Dorsolateral prefrontal cortex (tissue), 120 donors: ENCODE measurements at regions of chr21 and their contacts with region 1.

Region 1: GRCh38 chr21:32978341-32979270 is 47.1 kb upstream of the OLIG2 start:
- DNase-seq: peak; percentile 16 to 90 (median 80)
- H3K4me3 ChIP-seq: peak overlapping the region in 18 of 59 donors; percentile 2 to 52 (median 18)
- H3K27ac ChIP-seq: peak overlapping the region; percentile 85 to 100 (median 98)
- H3K27me3 ChIP-seq: peaks cover 0 to 12% (median 0%) of the 10 kb centered on the region in 45 donors
- CTCF ChIP-seq: peak in 14 of 56 donors; percentile 4 to 39 (median 14)

Region 2: DNA sequence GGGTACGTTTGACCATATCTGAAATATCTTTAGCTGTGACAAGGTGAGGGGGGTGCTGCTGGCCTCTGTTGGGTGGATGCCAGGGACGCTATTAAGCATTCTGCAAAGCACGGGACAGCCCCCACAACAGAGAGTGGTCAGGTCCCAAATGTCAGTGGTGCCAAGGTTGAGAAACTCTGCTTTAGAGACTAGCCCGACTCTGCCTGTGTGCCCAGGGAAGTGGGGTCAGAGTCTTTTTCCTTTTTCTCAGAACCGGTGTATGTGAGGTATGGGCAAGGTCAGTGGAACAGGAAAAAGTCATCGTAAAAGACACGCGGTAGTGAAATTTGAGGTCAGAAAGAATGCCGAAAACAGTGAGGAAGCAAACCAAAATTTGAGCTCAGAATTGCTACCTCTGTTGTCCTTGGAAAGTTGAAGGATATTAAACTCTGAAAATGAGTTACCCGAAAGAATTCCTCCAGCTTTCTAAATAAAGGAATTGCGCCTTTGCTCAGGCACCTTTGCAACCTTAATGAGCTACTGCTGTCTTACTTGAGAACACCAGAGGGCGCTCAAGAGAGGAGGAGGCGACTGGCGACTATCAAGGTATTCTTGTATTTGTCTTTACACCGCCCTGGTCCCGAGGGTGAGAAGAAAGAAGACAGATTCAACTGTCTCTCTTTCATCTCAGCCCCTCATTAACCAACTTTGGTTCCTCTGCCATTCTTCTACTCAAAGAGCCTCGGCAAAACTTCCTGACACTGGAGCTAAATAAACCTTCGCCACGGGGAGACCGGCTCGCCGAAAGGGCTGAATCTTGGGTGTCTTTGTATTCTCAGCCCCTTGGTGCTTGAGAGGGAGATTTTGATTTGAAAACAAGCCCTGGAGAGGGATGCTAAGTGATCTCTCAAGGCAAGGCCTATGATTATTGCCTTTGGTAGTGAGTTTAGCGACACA is 38.3 kb before region 1 on chr21:
- intact Hi-C with region 1: loop called in 1 of 2 experiments (anchors 5 kb)
- DNase-seq: peak in 4 of 10 donors; percentile 19 to 59 (median 34)
- H3K4me3 ChIP-seq: peak overlapping the region in 14 of 59 donors; percentile 3 to 45 (median 29)
- H3K27ac ChIP-seq: peak overlapping the region in 11 of 59 donors; percentile 8 to 64 (median 45)
- H3K27me3 ChIP-seq: peaks cover 0 to 13% (median 0%) of the 10 kb centered on the region in 45 donors
- CTCF ChIP-seq: peak; percentile 48 to 95 (median 82)

Region 3: GRCh38 chr21:32955311-32956060 is 23.1 kb before region 1 on chr21:
- intact Hi-C with region 1: loop called in 1 of 2 experiments (anchors 2 kb)
- DNase-seq: peak in 4 of 10 donors; percentile 21 to 59 (median 40)
- H3K4me3 ChIP-seq: peak overlapping the region in 47 of 59 donors; percentile 2 to 56 (median 32)
- H3K27ac ChIP-seq: peak overlapping the region in 56 of 59 donors; percentile 1 to 91 (median 72)
- H3K27me3 ChIP-seq: peaks cover 0 to 57% (median 2%) of the 10 kb centered on the region in 45 donors
- CTCF ChIP-seq: peak in 5 of 56 donors; percentile 6 to 20 (median 11)

Region 4: DNA sequence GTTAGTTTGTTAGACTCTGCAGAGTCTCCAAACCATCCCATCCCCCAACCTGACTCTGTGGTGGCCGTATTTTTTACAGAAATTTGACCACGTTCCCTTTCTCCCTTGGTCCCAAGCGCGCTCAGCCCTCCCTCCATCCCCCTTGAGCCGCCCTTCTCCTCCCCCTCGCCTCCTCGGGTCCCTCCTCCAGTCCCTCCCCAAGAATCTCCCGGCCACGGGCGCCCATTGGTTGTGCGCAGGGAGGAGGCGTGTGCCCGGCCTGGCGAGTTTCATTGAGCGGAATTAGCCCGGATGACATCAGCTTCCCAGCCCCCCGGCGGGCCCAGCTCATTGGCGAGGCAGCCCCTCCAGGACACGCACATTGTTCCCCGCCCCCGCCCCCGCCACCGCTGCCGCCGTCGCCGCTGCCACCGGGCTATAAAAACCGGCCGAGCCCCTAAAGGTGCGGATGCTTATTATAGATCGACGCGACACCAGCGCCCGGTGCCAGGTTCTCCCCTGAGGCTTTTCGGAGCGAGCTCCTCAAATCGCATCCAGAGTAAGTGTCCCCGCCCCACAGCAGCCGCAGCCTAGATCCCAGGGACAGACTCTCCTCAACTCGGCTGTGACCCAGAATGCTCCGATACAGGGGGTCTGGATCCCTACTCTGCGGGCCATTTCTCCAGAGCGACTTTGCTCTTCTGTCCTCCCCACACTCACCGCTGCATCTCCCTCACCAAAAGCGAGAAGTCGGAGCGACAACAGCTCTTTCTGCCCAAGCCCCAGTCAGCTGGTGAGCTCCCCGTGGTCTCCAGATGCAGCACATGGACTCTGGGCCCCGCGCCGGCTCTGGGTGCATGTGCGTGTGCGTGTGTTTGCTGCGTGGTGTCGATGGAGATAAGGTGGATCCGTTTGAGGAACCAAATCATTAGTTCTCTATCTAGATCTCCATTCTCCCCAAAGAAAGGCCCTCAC is 47.2 kb after region 1 on chr21 and contains the start of gene OLIG2:
- intact Hi-C with region 1: loop called (anchors 2 to 5 kb)
- DNase-seq: peak; percentile 46 to 96 (median 95)
- H3K4me3 ChIP-seq: peak within 1 kb of the TSS; percentile 35 to 82 (median 61)
- H3K27ac ChIP-seq: peak within 1 kb of the TSS; percentile 40 to 93 (median 86)
- H3K27me3 ChIP-seq: peaks cover 0 to 100% (median 92%) of the 10 kb centered on the region in 45 donors
- CTCF ChIP-seq: peak in 1 of 56 donors; percentile 17
- total RNA-seq, gene OLIG2: 13.9 to 165 (median 45.4) TPM

Region 5: GRCh38 chr21:33078907-33079582 is 100.4 kb after region 1 on chr21:
- intact Hi-C with region 1: loop called in 1 of 2 experiments (anchors 10 kb)
- DNase-seq: peak; percentile 9 to 94 (median 88)
- H3K4me3 ChIP-seq: peak overlapping the region in 2 of 59 donors; percentile 0 to 25
- H3K27ac ChIP-seq: peak overlapping the region; percentile 11 to 98 (median 89)
- H3K27me3 ChIP-seq: peaks cover 0 to 21% (median 0%) of the 10 kb centered on the region in 45 donors
- CTCF ChIP-seq: peak in 49 of 56 donors; percentile 18 to 67 (median 45)

Region 6: GRCh38 chr21:33115631-33116510 is 137.3 kb after region 1 on chr21:
- intact Hi-C with region 1: loop called in 1 of 2 experiments (anchors 5 kb)
- DNase-seq: peak; percentile 73 to 91 (median 81)
- H3K4me3 ChIP-seq: peak overlapping the region in 22 of 59 donors; percentile 3 to 42 (median 18)
- H3K27ac ChIP-seq: peak overlapping the region; percentile 50 to 98 (median 92)
- H3K27me3 ChIP-seq: peaks cover 0 to 25% (median 5%) of the 10 kb centered on the region in 45 donors
- CTCF ChIP-seq: peak in 2 of 56 donors; percentile 11 to 15